Naive thymus-derived CD4-positive, alpha-beta T cell (primary cell): ENCODE measurements at regions of chr1 and their contacts with region 1.

Region 1: DNA sequence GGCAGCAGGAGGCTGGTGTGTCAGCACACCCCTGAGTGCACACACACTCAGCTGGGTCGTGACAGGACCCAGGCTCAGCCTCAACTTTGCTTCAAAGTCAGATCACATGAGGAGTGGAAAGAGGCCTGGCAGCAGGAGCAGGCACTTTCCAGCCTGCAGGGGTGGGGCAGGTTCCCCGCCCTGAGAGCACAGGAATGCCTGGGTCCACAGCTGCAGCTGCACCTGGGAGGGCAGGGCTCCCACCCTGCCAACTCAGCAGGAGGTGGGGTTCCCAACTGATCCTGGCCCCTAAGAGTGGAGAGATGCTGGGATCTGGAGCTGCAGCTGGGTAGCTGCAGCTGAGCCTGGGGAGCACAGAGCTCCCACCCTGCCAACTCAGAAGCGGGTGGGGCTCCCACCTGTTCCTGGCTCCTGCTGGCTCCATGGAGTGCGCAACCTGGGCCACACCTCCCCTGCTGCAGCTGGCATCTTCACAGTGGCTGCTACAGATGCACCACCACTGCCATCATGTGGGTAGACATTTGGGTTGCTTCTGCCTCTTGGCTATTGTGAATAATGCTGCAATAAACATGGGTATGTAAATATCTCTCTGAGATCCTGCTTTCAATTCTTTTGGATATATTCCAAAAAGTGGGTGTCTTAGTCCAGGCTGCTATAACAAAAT is 415.4 kb downstream of the TTLL7 start:
- DNase-seq: peak in 5 of 9 donors; percentile 25 to 45 (median 27)
- ATAC-seq: peak; percentile 55
- H3K4me3 ChIP-seq: no peak overlapping the region
- H3K4me3 Mint-ChIP-seq: peak overlapping the region in 1 of 10 donors; percentile 19
- H3K27ac ChIP-seq: no peak overlapping the region
- H3K27ac Mint-ChIP-seq: peak overlapping the region in 2 of 9 donors; percentile 37 to 52
- H3K4me1 ChIP-seq: peaks cover 0 to 8% of the 10 kb centered on the region in 2 donors
- H3K4me1 Mint-ChIP-seq: peaks cover 4 to 29% (median 17%) of the 10 kb centered on the region in 7 donors
- H3K27me3 ChIP-seq: no peaks in the 10 kb centered on the region
- H3K27me3 Mint-ChIP-seq: no peaks in the 10 kb centered on the region

Region 2: DNA sequence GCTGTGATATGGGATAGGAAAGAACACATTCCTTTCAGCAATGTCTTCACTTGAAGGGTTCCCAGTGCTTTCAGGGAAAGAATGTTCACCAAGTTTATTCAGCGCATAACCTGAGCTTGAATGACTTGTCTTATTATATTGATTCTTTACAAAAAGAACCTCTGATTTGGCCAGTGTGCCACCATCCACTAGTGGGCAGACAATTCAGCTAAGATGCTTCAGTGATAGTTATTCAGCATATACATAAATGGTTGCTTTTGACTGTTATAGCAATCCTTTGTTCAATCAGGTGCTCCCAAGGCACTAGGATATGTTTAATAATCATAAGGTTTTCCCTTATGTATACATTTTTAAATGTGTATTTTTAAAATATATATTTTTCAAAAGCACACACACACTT is 694.4 kb before region 1 on chr1:
- CTCF ChIA-PET with region 1: no interaction called
- POLR2A ChIA-PET with region 1: no interaction called
- intact Hi-C with region 1: loop called in 1 of 2 experiments (anchors 1 kb)
- DNase-seq: no peak
- ATAC-seq: no peak
- H3K4me3 ChIP-seq: no peak overlapping the region
- H3K4me3 Mint-ChIP-seq: no peak overlapping the region
- H3K27ac ChIP-seq: no peak overlapping the region
- H3K27ac Mint-ChIP-seq: no peak overlapping the region
- H3K4me1 ChIP-seq: no peaks in the 10 kb centered on the region
- H3K4me1 Mint-ChIP-seq: peaks cover 0 to 1% (median 0%) of the 10 kb centered on the region in 7 donors
- H3K27me3 ChIP-seq: no peaks in the 10 kb centered on the region
- H3K27me3 Mint-ChIP-seq: no peaks in the 10 kb centered on the region

Region 3: GRCh38 chr1:83508485-83509151 is 74.9 kb before region 1 on chr1:
- CTCF ChIA-PET with region 1: interaction called, 5 read pairs
- POLR2A ChIA-PET with region 1: no interaction called
- intact Hi-C with region 1: loop called in 1 of 2 experiments (anchors 1 kb)
- DNase-seq: peak in 8 of 9 donors; percentile 27 to 89 (median 84)
- ATAC-seq: peak; percentile 96
- H3K4me3 ChIP-seq: peak overlapping the region; percentile 7
- H3K4me3 Mint-ChIP-seq: peak overlapping the region; percentile 56 to 96 (median 74)
- H3K27ac ChIP-seq: peak overlapping the region; percentile 76
- H3K27ac Mint-ChIP-seq: peak overlapping the region; percentile 89 to 99 (median 95)
- H3K4me1 ChIP-seq: peaks cover 6 to 36% of the 10 kb centered on the region in 2 donors
- H3K4me1 Mint-ChIP-seq: peaks cover 17 to 78% (median 64%) of the 10 kb centered on the region in 7 donors
- H3K27me3 ChIP-seq: no peaks in the 10 kb centered on the region
- H3K27me3 Mint-ChIP-seq: no peaks in the 10 kb centered on the region

Region 4: DNA sequence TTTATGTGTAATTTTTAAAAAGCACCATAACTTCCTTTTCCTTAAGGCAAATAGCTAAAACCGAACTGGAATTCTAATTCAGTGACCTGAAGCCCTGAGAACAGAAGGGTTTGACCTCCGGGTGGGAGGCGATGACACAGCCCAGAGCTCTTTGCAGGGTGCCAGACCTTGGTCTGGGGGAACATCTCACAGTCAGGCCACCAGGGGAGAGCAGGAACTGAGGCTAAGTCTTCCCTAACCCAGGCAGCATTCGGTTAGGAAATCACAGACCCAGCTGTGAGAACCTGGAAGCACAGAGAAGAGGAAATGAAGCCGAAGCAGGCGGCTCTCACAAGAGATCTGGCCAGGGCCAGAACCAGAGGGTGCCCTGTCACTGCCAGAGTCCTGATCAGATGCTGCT is 29.3 kb before region 1 on chr1:
- CTCF ChIA-PET with region 1: no interaction called
- POLR2A ChIA-PET with region 1: no interaction called
- intact Hi-C with region 1: no loop called
- DNase-seq: no peak
- ATAC-seq: no peak
- H3K4me3 ChIP-seq: no peak overlapping the region
- H3K4me3 Mint-ChIP-seq: no peak overlapping the region
- H3K27ac ChIP-seq: no peak overlapping the region
- H3K27ac Mint-ChIP-seq: peak overlapping the region in 1 of 9 donors; percentile 15
- H3K4me1 ChIP-seq: no peaks in the 10 kb centered on the region
- H3K4me1 Mint-ChIP-seq: peaks cover under 1 to 12% (median 4%) of the 10 kb centered on the region in 7 donors
- H3K27me3 ChIP-seq: no peaks in the 10 kb centered on the region
- H3K27me3 Mint-ChIP-seq: no peaks in the 10 kb centered on the region